ENCODE measurements at regions of chr14 and their contacts with region 1.

Region 1: GRCh38 chr14:61456720-61457119 is 135.3 kb downstream of the PRKCH start:
- DNase-seq: peak in 3 of 4 donors; percentile 77 to 80 (median 79)
- ATAC-seq: peak; percentile 90
- H3K4me3 ChIP-seq: no peak overlapping the region
- H3K27ac ChIP-seq: no peak overlapping the region
- H3K4me1 ChIP-seq: peaks cover 0 to 19% of the 10 kb centered on the region in 2 donors
- H3K27me3 ChIP-seq: no peaks in the 10 kb centered on the region
- CTCF ChIP-seq: peak; percentile 80 to 82

Region 2: DNA sequence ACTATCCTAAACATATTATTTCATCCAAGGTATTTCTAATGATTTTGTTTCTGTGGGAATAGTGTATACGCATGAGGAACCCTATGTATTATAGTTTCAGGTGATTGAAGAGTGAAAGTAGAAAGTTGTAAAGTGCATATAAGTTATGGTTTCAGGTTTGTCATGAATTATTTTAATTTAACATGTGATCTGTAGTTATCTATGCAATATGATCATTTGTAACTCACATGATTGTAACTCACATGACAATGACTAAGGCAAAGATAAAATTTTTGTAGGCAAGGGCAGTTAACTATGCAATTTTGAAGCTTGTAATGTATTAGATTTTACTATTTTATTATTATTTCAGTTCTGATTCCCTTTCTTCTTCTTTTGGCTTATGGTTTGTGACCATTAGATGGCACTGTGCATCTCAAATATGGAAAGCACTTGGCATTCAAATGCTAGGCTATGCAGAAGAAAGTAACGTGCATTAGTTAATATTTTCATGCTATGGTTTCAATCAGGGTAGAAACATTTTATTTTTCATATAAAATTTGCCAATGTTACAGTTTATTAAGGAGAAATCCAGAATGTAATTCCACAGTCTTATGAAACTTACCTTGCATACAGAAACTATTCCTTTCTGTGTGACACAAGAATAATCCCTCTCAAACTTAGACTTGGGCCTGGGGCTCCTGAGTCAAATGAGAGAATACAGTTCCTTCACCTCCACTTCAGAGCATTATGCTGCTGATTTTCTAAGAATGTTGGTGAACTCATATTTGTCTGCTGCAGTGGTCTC is 159.8 kb before region 1 on chr14:
- intact Hi-C with region 1: loop called in 1 of 2 experiments (anchors 10 kb)
- DNase-seq: peak in 2 of 4 donors; percentile 39 to 59
- ATAC-seq: peak; percentile 88
- H3K4me3 ChIP-seq: no peak overlapping the region
- H3K27ac ChIP-seq: no peak overlapping the region
- H3K4me1 ChIP-seq: peaks cover 0 to 2% of the 10 kb centered on the region in 2 donors
- H3K27me3 ChIP-seq: no peaks in the 10 kb centered on the region
- CTCF ChIP-seq: peak; percentile 41 to 60

Region 3: DNA sequence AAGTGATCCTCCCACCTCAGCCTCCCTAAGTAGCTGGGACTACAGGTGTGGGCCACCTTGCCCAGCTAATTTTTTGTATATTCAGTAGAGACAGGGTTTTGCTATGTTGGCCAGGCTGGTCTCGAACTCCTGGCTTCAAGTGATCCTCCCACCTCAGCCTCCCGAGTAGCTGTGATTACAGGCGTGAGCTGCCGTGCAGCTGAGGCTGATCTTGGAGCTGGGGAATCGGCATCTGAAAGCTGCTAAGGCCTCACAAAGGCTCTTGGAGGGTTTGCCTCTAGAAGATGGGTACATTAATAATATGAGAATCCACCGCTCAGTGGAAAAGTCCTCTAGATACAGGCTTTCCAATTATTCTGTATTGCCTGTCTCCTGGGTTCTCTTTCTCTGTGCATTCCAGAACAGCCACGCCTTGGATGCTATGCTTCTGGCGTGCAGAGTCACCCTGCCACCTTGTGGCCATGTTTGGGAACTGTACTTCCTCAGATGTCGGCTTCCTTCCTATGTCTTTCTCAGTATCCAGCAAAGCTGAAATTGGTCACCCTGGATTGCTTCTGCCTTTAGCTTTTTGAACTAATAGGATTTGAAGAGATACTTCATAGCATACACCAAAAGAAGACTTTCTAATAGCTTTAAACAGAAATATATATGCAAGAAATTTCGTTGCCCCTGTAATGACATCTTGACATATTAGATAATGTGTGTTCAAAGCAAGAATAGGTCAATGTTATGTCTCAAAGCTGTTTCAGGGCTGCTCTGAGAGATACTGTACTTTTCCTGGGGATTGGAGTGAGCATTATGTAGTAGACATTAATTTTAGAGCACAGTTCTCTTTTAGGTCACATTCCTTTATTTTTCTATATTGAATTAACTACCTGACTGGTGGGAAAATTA is 380.9 kb after region 1 on chr14:
- intact Hi-C with region 1: loop called (anchors 5 to 10 kb)
- DNase-seq: peak; percentile 71 to 85 (median 79)
- ATAC-seq: peak; percentile 99
- H3K4me3 ChIP-seq: no peak overlapping the region
- H3K27ac ChIP-seq: no peak overlapping the region
- H3K4me1 ChIP-seq: no peaks in the 10 kb centered on the region
- H3K27me3 ChIP-seq: no peaks in the 10 kb centered on the region
- CTCF ChIP-seq: peak; percentile 95 to 98

Region 4: DNA sequence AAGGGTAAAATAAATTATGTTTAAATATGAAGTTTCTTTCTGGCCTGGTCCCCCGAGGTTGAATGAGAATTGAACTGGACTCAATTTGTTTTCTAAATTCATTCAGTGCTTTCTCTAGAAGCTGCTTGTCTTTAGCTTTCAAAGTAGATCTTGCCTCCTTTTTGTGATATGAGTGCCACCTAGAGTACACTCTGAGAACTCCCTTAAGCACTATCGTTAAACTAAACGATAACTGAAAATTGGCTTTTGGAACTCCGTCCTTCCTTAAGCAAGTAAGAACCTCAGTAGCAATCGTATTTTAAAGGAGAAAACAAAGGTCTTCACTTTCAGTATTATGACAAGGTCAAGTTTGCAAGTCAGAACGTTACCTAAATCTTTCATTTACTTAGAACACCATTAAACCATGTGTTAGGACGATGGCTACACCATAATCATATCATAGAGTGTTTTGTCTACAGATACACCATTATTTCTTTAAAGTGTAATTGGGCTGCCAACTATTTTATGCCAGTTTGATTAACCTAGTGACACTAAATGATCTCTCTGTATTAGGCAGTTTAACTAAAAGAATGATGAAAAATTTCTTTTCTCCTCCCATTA is 670.3 kb after region 1 on chr14:
- intact Hi-C with region 1: loop called in 1 of 2 experiments (anchors 10 kb)
- DNase-seq: peak in 1 of 4 donors; percentile 67
- ATAC-seq: peak; percentile 89
- H3K4me3 ChIP-seq: no peak overlapping the region
- H3K27ac ChIP-seq: no peak overlapping the region
- H3K4me1 ChIP-seq: no peaks in the 10 kb centered on the region
- H3K27me3 ChIP-seq: peaks cover 0 to 23% of the 10 kb centered on the region in 2 donors
- CTCF ChIP-seq: peak; percentile 58 to 73